ENCODE measurements at regions of chr16 and their contacts with region 1.

Region 1: GRCh38 chr16:77288222-77288621 is 89.0 kb downstream of the SYCE1L start:
- DNase-seq: no peak
- H3K4me3 Mint-ChIP-seq: no peak overlapping the region
- H3K27ac Mint-ChIP-seq: no peak overlapping the region
- H3K4me1 Mint-ChIP-seq: peaks cover 8% of the 10 kb centered on the region
- H3K27me3 Mint-ChIP-seq: no peaks in the 10 kb centered on the region

Region 2: GRCh38 chr16:76732894-76733293 is 555.3 kb before region 1 on chr16:
- CTCF ChIA-PET with region 1: no interaction called
- intact Hi-C with region 1: no loop called
- DNase-seq: no peak
- H3K4me3 Mint-ChIP-seq: no peak overlapping the region
- H3K27ac Mint-ChIP-seq: no peak overlapping the region
- H3K4me1 Mint-ChIP-seq: no peaks in the 10 kb centered on the region
- H3K27me3 Mint-ChIP-seq: no peaks in the 10 kb centered on the region

Region 3: DNA sequence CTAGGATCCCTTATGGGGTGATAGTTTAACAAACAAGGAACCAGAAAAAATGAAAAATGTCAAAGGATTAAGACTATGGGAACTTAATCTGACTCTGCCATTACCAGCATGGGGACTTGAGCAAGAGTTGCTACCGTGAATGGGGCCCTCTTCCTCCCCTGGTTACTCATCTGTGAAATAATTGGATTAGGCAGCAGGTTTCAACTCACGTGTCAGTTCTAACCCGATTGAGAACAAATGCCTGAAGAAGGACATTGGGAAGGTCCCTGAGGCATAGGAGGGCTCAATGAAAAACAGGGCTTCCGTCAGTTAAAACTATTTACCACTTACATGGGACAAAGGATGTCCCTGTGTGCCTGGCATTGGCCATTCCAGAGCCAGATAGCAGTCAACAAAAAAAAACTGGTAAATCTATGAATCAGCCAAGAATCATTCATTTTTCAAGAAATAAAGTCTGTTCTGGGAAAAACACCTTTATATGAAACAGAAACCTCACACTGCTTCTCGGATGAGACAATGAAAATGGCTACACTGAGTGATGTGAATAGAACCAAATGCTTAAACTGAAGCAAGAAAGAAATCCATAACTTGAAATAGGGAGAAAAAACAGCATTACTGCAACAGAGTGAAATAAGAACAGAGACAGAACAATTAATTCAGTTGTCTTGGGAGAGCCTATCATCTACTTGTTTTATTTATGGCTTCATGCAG is 42.3 kb after region 1 on chr16:
- CTCF ChIA-PET with region 1: no interaction called
- intact Hi-C with region 1: loop called (anchors 1 kb)
- DNase-seq: peak; percentile 58
- H3K4me3 Mint-ChIP-seq: no peak overlapping the region
- H3K27ac Mint-ChIP-seq: peak overlapping the region; percentile 71
- H3K4me1 Mint-ChIP-seq: peaks cover 17% of the 10 kb centered on the region
- H3K27me3 Mint-ChIP-seq: peaks cover 18% of the 10 kb centered on the region